H1 (cell line): ENCODE measurements at regions of chr18 and their contacts with region 1.

Region 1: DNA sequence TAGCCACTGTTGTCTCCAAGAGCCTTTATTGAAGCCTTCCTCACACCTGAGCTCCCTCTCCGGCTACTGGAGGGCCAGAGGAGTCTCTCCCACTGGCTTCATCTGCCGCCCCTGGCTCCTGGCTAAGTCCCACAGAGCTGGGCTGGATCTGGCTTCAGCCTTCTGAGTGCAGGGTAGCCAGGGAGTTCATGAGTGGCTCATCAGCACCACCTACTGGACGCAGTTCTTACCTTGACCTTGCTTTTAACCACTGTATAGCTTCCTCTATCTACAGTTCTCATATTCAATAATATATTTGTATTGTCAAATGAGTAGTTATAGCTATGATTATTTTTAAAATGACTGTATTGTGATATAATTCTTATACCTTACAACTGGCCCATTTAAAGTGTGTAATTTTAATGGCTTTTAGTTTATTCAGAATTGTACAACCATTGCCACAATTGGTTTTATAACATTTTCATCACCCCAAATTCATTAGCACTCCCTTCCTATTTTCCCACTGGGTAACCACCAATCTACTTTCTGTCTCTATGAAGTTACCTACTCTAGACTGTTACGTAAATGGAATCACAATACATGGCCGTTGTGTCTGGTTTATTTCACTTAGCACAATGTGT is 17.7 kb downstream of the CNDP1 start:
- DNase-seq: peak; percentile 68 to 84
- H3K4me3 ChIP-seq: no peak overlapping the region
- H3K27ac ChIP-seq: no peak overlapping the region
- H3K4me1 ChIP-seq: no peaks in the 10 kb centered on the region
- H3K27me3 ChIP-seq: no peaks in the 10 kb centered on the region
- CTCF ChIP-seq: peak; percentile 59 to 77 (median 77)
- EP300 ChIP-seq: no peak
- POLR2A ChIP-seq: no peak
- RAD21 ChIP-seq: peak; percentile 91

Region 2: GRCh38 chr18:74353169-74353775 is 198.8 kb before region 1 on chr18:
- CTCF ChIA-PET with region 1: interaction called, 16 read pairs
- POLR2A ChIA-PET with region 1: no interaction called
- DNase-seq: peak in 1 of 2 experiments; percentile 13
- H3K4me3 ChIP-seq: no peak overlapping the region
- H3K27ac ChIP-seq: no peak overlapping the region
- H3K4me1 ChIP-seq: no peaks in the 10 kb centered on the region
- H3K27me3 ChIP-seq: no peaks in the 10 kb centered on the region
- CTCF ChIP-seq: peak; percentile 48 to 88 (median 82)
- EP300 ChIP-seq: no peak
- POLR2A ChIP-seq: no peak
- RAD21 ChIP-seq: peak; percentile 88 to 91

Region 3: DNA sequence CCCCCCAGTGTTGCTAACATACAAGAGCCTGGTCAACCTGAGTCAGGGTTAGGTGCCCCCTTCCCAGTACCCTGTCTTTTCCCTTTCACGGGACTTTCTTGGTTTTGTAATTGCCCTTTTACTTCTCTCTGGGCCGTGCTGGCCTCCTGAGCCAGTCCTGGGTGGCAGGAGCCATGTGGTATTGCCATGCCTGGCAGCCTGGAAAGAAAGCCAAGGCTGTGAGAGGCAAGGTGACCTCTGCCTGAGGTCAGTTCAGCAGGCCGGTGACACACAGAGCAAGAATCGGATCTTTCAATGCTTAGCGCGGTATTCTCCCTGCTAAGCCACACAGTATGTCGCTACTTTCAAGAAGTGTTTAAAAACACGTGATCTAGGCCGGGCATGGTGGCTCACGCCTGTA is 184.1 kb before region 1 on chr18:
- CTCF ChIA-PET with region 1: no interaction called
- POLR2A ChIA-PET with region 1: no interaction called
- DNase-seq: no peak
- H3K4me3 ChIP-seq: no peak overlapping the region
- H3K27ac ChIP-seq: no peak overlapping the region
- H3K4me1 ChIP-seq: no peaks in the 10 kb centered on the region
- H3K27me3 ChIP-seq: no peaks in the 10 kb centered on the region
- CTCF ChIP-seq: no peak
- EP300 ChIP-seq: no peak
- POLR2A ChIP-seq: no peak
- RAD21 ChIP-seq: no peak

Region 4: GRCh38 chr18:74534981-74535649 is 16.9 kb before region 1 on chr18:
- CTCF ChIA-PET with region 1: interaction called, 11 read pairs
- POLR2A ChIA-PET with region 1: no interaction called
- DNase-seq: no peak
- H3K4me3 ChIP-seq: no peak overlapping the region
- H3K27ac ChIP-seq: no peak overlapping the region
- H3K4me1 ChIP-seq: no peaks in the 10 kb centered on the region; a peak in 1 of 7 replicates
- H3K27me3 ChIP-seq: no peaks in the 10 kb centered on the region
- CTCF ChIP-seq: no peak
- EP300 ChIP-seq: no peak
- POLR2A ChIP-seq: no peak
- RAD21 ChIP-seq: no peak

Region 5: DNA sequence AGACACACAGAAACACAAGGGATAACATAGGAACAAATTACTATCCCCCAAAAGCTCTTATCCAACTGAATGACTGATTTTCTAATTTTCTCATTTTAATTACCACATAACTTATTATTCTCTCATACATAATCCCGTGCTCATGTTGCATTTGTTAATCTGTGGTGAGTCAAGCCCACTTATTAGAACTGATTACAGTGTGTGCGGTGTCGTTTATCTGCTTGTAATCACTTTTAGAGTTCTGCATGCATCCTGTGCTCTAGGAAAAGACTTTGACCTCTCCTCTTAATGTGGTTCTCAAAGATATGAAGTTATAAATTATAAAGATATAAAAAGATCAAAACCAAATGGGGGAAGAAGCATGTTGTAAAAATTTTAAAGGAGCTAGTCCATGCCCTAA is 12.0 kb after region 1 on chr18:
- CTCF ChIA-PET with region 1: interaction called, 12 read pairs
- POLR2A ChIA-PET with region 1: no interaction called
- DNase-seq: no peak
- H3K4me3 ChIP-seq: no peak overlapping the region
- H3K27ac ChIP-seq: no peak overlapping the region
- H3K4me1 ChIP-seq: no peaks in the 10 kb centered on the region
- H3K27me3 ChIP-seq: no peaks in the 10 kb centered on the region
- CTCF ChIP-seq: no peak
- EP300 ChIP-seq: no peak
- POLR2A ChIP-seq: no peak
- RAD21 ChIP-seq: no peak

Region 6: GRCh38 chr18:74613381-74613780 is 61.3 kb after region 1 on chr18:
- CTCF ChIA-PET with region 1: no interaction called
- POLR2A ChIA-PET with region 1: no interaction called
- DNase-seq: no peak
- H3K4me3 ChIP-seq: no peak overlapping the region
- H3K27ac ChIP-seq: no peak overlapping the region
- H3K4me1 ChIP-seq: no peaks in the 10 kb centered on the region
- H3K27me3 ChIP-seq: no peaks in the 10 kb centered on the region
- CTCF ChIP-seq: no peak
- EP300 ChIP-seq: no peak
- POLR2A ChIP-seq: no peak
- RAD21 ChIP-seq: no peak